ENCODE measurements at regions of chr16 and their contacts with region 1.

Region 1: DNA sequence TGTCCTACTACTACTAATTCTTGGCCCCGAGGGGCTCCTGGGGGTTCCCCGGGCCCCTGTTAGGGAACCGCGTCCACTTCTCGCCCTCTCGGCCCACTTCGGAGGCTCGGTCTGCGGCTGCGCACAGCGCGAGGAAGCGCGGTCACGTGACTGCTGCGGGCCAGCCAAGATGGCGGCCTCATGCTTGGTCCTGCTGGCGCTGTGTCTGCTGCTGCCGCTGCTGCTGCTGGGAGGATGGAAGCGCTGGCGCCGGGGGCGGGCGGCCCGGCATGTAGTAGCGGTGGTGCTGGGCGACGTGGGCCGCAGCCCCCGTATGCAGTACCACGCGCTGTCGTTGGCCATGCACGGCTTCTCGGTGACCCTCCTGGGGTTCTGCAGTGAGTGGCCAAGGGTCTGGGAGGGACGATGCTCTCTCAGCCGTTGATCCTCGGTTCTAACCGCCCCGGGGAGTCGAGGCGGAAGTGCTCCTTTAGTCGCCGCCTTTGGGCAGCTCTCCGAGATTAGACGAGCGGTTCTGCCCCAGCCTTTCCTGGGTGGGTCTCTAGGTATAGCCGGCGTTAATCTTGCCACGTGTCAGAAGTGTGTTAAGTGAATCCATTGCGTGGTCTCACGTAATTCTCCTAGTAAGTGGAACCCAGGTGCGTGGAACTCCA is at the start of gene ALG1:
- DNase-seq: peak; percentile 83 to 98 (median 90)

Region 2: DNA sequence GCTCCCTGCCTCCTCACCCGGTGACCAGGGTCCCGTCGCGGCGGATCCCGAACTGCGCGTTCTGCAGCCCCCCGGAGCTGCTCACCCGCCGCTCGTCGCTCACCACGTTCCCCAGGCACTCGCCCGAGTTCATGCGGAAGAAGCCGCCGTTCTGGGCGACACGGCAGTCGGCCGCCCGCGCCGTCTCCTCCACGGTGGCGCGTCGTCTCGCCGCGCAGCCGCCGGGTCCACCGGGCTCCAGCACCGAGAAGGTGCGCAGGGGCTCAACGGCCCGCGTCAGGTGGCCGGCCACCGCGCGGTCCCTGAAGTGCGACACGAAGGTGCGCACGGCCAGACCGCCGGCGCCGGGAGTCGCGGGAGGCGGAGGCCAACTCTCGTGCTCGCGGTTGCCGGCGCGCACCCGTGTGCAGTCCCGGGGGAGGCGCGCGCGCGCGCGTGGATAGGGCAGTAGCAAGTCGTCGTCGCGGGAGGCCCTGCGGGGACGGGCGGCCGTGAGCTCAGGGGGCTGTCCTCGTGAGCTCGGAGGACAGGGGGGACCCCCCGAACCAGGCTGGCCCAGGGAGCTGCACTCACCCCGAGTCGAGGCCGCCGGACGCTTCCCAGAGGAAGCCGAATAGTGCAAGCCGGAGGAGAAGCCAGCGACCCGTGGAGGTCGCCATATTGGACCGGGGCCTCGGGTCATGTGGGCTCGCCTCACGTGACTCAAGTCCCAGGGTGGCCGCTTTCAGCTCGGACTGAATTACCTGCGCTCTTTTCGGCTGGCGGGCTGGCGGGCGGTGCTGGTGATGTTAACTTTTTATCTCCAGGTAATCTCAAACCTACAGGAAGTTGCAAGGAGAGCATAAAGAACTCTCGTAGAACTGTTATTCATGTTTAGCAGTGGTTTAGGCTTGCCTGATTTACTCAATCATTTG is 38.3 kb before region 1 on chr16 and contains the start of gene NAGPA:
- intact Hi-C with region 1: loop called (anchors 5 kb)
- DNase-seq: peak; percentile 85 to 98 (median 94)

Measured in posterior cingulate gyrus (tissue), 11 donors.